HCT116 (cell line): ENCODE measurements at regions of chr13 and their contacts with region 1.

Region 1: DNA sequence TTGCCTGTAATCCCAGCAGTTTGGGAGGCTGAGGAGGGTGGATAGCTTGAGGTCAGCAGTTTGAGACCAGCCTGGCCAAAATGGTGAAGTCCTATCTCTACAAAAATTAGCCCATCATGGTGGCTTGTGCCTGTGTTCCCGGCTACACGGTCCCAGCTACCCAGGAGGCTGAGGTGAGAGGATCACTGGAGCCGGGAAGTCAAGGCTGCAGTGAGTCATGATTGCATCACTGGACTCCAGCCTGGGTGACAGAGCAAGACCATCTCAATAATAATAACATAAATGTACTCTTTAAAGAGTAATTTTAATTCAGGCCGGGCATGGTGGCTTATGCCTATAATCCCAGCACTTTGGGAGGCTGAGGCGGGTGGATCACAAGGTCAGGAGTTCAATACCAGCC is 38.7 kb downstream of the SKA3 start:
- DNase-seq: peak; percentile 59
- ATAC-seq: peak; percentile 18
- H3K4me3 ChIP-seq: no peak overlapping the region; a peak in 1 of 4 replicates
- H3K27ac ChIP-seq: peak overlapping the region; percentile 12; the same call in 1 of the 2 replicates
- H3K4me1 ChIP-seq: peaks cover 11 to 30% of the 10 kb centered on the region in 2 experiments; a peak in 3 of 4 replicates
- H3K27me3 ChIP-seq: no peaks in the 10 kb centered on the region
- CTCF ChIP-seq: no peak
- POLR2A ChIP-seq: no peak
- RAD21 ChIP-seq: no peak

Region 2: DNA sequence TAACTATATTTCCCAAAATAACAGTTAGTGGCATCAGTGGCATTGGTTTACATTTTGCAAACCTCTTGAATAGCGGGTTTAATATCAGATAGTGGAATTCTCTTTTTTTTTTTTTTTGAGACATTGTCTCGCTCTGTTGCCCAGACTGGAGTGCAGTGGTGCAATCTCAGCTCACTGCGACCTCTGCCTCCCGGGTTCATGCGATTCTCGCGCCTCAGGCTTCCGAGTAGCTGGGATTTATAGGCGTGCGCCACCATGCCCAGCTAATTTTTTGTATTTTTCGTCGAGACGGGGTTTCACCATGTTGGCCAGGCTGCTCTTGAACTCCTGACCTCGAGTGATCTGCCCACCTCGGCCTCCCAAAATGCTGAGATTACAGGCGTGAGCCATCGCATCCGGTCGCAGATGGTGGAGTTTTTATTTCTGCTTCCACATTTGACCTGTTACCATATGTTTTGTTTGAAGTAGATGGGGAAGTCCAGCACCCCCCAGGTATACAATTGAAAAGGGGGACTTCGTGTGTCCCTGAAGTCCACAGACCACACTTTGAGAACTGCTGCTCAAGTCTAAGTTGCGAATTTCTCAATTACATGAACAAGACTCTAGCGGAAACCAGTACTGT is 194.6 kb before region 1 on chr13:
- CTCF ChIA-PET with region 1: interaction called, 15 read pairs
- POLR2A ChIA-PET with region 1: interaction called, 3 read pairs
- RAD21 ChIA-PET with region 1: no interaction called
- intact Hi-C with region 1: loop called (anchors 1 kb)
- DNase-seq: no peak
- ATAC-seq: no peak
- H3K4me3 ChIP-seq: no peak overlapping the region
- H3K27ac ChIP-seq: no peak overlapping the region
- H3K4me1 ChIP-seq: peaks cover 0 to 8% of the 10 kb centered on the region in 2 experiments; a peak in 2 of 4 replicates
- H3K27me3 ChIP-seq: no peaks in the 10 kb centered on the region
- CTCF ChIP-seq: no peak
- POLR2A ChIP-seq: no peak
- RAD21 ChIP-seq: no peak

Region 3: GRCh38 chr13:21060987-21061763 is 76.5 kb before region 1 on chr13 and contains the start of gene LATS2:
- CTCF ChIA-PET with region 1: no interaction called
- POLR2A ChIA-PET with region 1: no interaction called
- RAD21 ChIA-PET with region 1: no interaction called
- intact Hi-C with region 1: loop called (anchors 2 kb)
- DNase-seq: peak; percentile 82
- ATAC-seq: peak; percentile 88
- H3K4me3 ChIP-seq: peak within 1 kb of the TSS; percentile 64 to 85
- H3K27ac ChIP-seq: peak within 1 kb of the TSS; percentile 96
- H3K4me1 ChIP-seq: peaks cover 24 to 29% of the 10 kb centered on the region in 2 experiments
- H3K27me3 ChIP-seq: no peaks in the 10 kb centered on the region
- CTCF ChIP-seq: 0 out of 6 replicates have a peak, but pooled peaks of 1 of the 3 experiments have one; percentile 6
- POLR2A ChIP-seq: peak; percentile 38
- RAD21 ChIP-seq: 0 out of 2 replicates have a peak, but pooled peaks have one; percentile 20
- total RNA-seq, gene LATS2: 18.8 TPM